Activated naive CD4-positive, alpha-beta T cell treated with anti-CD3 and anti-CD28 coated beads for 36 hours (primary cell): ENCODE measurements at regions of chr18 and their contacts with region 1.

Region 1: GRCh38 chr18:2540575-2540974 is 30.7 kb downstream of the METTL4 start:
- DNase-seq: no peak
- H3K4me3 Mint-ChIP-seq: no peak overlapping the region
- H3K27ac Mint-ChIP-seq: no peak overlapping the region
- H3K4me1 Mint-ChIP-seq: no peaks in the 10 kb centered on the region
- H3K27me3 Mint-ChIP-seq: no peaks in the 10 kb centered on the region

Region 2: DNA sequence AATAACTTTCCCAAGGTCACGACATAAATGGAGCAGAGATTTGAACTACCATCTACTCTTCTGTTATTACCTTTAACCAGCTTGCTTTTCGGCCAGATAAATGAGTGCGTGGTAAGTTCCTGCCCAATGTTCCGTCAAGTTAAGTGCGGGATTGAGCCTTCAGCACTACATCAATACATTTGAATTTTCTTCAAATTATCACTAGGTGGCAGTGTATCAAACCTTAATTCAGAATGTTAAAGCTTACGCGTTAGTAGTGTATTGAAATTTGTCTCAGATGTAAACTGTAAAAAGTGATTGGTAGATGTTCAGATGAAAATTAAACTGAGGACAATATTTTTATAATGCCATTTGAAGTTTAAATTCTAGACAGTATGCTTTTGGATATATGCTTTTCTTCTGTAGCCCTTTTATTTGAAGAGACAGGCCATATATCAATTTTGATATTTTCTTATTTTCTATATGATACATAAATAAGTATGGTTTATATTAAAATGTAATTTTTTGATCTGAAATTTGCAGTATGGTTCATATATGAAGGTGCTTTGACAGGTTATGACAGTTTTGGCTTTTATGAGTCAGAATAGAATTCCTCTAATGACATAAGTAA is 954.6 kb before region 1 on chr18:
- CTCF ChIA-PET with region 1: no interaction called
- intact Hi-C with region 1: loop called (anchors 5 kb)
- DNase-seq: no peak
- H3K4me3 Mint-ChIP-seq: no peak overlapping the region
- H3K27ac Mint-ChIP-seq: no peak overlapping the region
- H3K4me1 Mint-ChIP-seq: no peaks in the 10 kb centered on the region
- H3K27me3 Mint-ChIP-seq: peaks cover 13% of the 10 kb centered on the region

Region 3: DNA sequence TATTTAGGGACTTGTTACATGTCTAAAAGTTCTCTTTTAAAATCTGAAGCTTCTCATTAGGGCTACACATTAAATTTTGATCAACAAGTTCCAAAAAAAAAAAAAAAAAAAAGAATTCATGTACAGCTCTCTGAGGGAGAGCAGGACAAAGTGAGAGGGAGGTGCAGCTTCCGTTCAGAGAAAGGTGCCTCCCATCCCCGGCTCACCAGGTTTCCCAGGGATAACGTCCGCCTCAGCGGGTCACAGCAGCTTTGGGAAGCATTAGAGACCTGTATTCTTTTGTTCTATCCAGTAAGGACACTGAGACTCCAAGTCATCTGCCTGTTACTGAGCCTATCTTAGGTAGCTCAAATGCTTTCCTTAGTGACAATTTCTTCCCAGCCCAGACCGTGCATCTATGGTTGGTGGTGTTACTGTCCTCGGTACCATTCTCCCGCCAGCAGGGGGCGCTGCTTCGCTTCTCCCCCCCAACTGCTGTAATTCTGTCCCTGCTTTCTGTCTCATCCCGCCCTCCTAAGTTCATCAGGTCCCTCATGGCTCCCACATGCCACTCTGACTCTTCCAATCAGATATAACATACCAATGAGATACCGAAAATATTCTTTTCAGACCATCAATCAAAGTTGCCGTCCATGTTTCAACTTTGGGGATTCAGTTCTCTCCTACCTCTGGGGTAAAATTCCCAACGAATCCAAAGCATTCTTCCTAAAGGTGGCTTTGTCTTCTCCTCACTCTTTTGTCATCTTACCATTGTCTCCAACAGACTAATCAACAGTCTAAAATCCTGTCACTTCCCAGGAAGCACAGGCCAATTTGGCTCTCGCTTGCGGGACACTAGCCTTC is 435.7 kb before region 1 on chr18:
- CTCF ChIA-PET with region 1: interaction called, 16 read pairs
- intact Hi-C with region 1: loop called (anchors 1 kb)
- DNase-seq: peak; percentile 61
- H3K4me3 Mint-ChIP-seq: no peak overlapping the region
- H3K27ac Mint-ChIP-seq: no peak overlapping the region
- H3K4me1 Mint-ChIP-seq: no peaks in the 10 kb centered on the region
- H3K27me3 Mint-ChIP-seq: peaks cover 5% of the 10 kb centered on the region

Region 4: DNA sequence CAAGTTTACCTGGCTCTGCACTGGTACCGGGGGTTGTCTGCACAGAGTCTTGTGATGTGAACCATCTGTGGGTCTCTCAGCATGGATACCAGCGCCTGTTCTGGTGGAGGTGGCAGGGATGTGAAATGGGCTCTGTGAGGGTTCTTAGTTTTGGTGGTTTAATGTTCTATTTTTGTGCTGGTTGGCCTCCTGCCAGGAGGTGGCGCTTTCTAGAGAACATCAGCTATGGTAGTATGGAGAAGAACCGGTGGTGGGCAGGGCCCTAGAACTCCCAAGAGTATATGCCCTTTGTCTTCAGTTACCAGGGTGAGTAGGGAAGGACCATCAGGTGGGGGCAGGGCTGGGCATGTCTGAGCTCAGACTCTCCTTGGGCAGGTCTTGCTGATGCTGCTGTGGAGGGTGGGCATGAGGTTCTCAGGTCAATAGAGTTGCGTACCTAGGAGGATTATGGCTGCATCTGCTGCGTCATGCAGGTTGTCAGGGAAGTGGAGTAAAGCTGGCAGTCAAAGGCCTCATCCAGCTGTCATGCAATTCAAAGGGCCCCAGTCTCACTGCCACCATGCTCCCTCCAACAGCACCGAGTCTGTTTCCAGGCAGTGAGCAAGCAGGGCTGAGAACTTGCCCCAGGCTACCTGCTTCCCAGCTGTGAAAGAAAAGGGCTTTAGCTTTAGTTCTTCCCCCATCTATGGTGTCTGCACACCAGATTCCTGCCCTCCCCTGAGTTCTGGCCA is 247.3 kb before region 1 on chr18:
- CTCF ChIA-PET with region 1: no interaction called
- intact Hi-C with region 1: loop called (anchors 5 kb)
- DNase-seq: peak; percentile 10
- H3K4me3 Mint-ChIP-seq: no peak overlapping the region
- H3K27ac Mint-ChIP-seq: no peak overlapping the region
- H3K4me1 Mint-ChIP-seq: no peaks in the 10 kb centered on the region
- H3K27me3 Mint-ChIP-seq: peaks cover 13% of the 10 kb centered on the region

Region 5: DNA sequence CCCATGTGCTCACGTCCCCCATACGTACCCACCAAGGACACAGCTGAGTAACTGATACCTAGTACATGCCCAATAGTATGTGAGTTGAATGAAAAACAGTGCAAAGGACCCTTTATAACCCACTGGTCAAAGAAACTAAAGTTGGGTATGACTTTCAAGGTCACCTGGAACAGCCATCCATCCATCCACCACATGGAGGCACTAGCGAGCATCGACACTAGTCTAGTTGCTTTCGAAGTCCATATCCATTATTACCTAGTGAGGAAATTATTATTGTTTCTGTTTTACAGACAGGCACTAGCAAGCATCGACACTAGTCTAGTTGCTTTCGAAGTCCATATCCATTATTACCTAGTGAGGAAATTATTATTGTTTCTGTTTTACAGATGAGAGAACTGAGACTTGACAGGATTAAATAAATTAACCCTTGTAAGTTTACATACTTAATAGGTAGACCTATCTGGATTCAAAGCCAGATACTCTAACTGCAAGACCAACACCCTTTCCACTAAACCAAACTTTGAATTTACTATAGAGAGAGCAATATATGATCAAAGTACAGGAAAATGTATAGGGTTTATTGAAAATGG is 202.9 kb before region 1 on chr18:
- CTCF ChIA-PET with region 1: interaction called, 39 read pairs
- intact Hi-C with region 1: loop called (anchors 1 kb)
- DNase-seq: peak; percentile 67
- H3K4me3 Mint-ChIP-seq: no peak overlapping the region
- H3K27ac Mint-ChIP-seq: no peak overlapping the region
- H3K4me1 Mint-ChIP-seq: no peaks in the 10 kb centered on the region
- H3K27me3 Mint-ChIP-seq: peaks cover 5% of the 10 kb centered on the region

Region 6: DNA sequence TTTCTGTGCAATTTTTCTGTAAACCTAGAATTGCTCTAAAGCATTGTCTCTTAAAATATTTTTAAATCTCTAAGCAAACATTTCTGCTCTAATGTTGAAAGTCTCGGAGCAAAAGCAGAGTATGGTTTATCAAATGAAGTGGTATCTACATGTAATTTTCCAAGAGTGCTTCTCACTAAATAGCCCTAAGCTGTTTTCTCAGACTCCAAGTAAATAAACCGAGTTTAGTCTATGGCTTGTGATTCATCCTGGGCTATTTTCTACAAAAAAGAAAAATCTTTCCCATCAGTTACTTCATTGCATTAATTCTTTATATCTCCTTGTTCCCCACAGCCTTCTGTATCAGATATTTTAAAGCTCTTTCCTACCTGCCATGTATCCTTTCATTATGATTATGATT is 60.0 kb before region 1 on chr18:
- CTCF ChIA-PET with region 1: no interaction called
- intact Hi-C with region 1: no loop called
- DNase-seq: no peak
- H3K4me3 Mint-ChIP-seq: no peak overlapping the region
- H3K27ac Mint-ChIP-seq: no peak overlapping the region
- H3K4me1 Mint-ChIP-seq: no peaks in the 10 kb centered on the region
- H3K27me3 Mint-ChIP-seq: peaks cover 12% of the 10 kb centered on the region

Region 7: GRCh38 chr18:2502394-2502793 is 38.2 kb before region 1 on chr18:
- CTCF ChIA-PET with region 1: no interaction called
- intact Hi-C with region 1: no loop called
- DNase-seq: no peak
- H3K4me3 Mint-ChIP-seq: no peak overlapping the region
- H3K27ac Mint-ChIP-seq: no peak overlapping the region
- H3K4me1 Mint-ChIP-seq: no peaks in the 10 kb centered on the region
- H3K27me3 Mint-ChIP-seq: no peaks in the 10 kb centered on the region